ENCODE measurements at regions of chr9 and their contacts with region 1.

Region 1: GRCh38 chr9:99368341-99369323 is 146.6 kb downstream of the SEC61B start:
- DNase-seq: peak; percentile 67 to 86
- ATAC-seq: peak; percentile 93 to 95 (median 94)
- H3K4me3 ChIP-seq: peak overlapping the region; percentile 64
- H3K27ac ChIP-seq: peak overlapping the region; percentile 92
- H3K4me1 ChIP-seq: peaks cover 36% of the 10 kb centered on the region
- H3K27me3 ChIP-seq: no peaks in the 10 kb centered on the region
- CTCF ChIP-seq: no peak

Region 2: DNA sequence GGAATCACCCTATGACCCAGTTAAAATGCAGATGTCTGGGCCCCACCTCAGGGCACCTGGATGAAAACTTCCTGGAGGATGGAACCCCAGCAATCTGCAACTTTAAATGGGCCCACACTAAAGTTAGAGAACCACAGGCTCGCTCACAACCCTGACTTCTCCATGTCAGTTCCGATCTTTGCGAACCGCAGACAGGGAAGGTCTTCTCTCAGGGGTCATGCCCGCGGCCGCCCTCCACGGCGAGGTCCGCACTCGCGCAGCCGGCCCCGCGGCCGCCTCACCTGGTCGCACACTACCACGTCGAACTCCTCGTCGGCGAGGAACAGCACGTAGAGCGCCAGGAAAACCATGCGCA is 147.4 kb before region 1 on chr9:
- intact Hi-C with region 1: no loop called
- DNase-seq: no peak
- ATAC-seq: no peak
- H3K4me3 ChIP-seq: peak overlapping the region; percentile 80
- H3K27ac ChIP-seq: peak overlapping the region; percentile 99
- H3K4me1 ChIP-seq: peaks cover 65% of the 10 kb centered on the region
- H3K27me3 ChIP-seq: no peaks in the 10 kb centered on the region
- CTCF ChIP-seq: no peak

Region 3: DNA sequence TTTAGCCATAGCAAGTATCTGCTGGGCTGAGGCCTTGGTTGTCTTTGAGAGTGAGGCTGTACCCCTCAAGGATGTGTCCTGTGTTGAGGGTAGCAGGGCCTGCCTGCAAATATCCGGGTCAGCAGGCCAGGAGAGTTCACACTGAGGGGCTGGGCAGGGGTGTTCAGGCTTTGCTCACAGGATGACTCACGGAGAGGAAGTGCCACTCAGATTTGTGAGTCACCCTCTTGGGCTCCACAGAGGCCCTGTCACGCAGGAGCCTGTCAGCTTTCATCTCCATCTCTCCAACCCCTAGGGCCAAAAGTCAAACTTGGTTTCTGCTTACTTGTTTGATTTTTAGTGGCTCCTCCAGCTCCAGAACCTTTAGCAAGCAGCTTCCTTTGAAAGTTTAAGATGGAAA is 64.9 kb after region 1 on chr9:
- intact Hi-C with region 1: loop called in 1 of 2 experiments (anchors 5 kb)
- DNase-seq: peak; percentile 24 to 55
- ATAC-seq: peak; percentile 69 to 95 (median 92)
- H3K4me3 ChIP-seq: no peak overlapping the region
- H3K27ac ChIP-seq: peak overlapping the region; percentile 23
- H3K4me1 ChIP-seq: no peaks in the 10 kb centered on the region
- H3K27me3 ChIP-seq: no peaks in the 10 kb centered on the region
- CTCF ChIP-seq: no peak

Region 4: GRCh38 chr9:99445371-99445891 is 76.8 kb after region 1 on chr9:
- intact Hi-C with region 1: loop called (anchors 2 to 5 kb)
- DNase-seq: peak; percentile 78 to 89
- ATAC-seq: peak; percentile 96 to 98 (median 96)
- H3K4me3 ChIP-seq: peak overlapping the region; percentile 8
- H3K27ac ChIP-seq: peak overlapping the region; percentile 86
- H3K4me1 ChIP-seq: peaks cover 20% of the 10 kb centered on the region
- H3K27me3 ChIP-seq: no peaks in the 10 kb centered on the region
- CTCF ChIP-seq: no peak

Region 5: GRCh38 chr9:99539925-99540324 is 171.3 kb after region 1 on chr9:
- intact Hi-C with region 1: no loop called
- DNase-seq: no peak
- ATAC-seq: no peak
- H3K4me3 ChIP-seq: no peak overlapping the region
- H3K27ac ChIP-seq: no peak overlapping the region
- H3K4me1 ChIP-seq: no peaks in the 10 kb centered on the region
- H3K27me3 ChIP-seq: no peaks in the 10 kb centered on the region
- CTCF ChIP-seq: no peak

Measured in psoas muscle (tissue), 8 donors.